A673 (cell line): ENCODE measurements at regions of chr15 and their contacts with region 1.

Region 1: DNA sequence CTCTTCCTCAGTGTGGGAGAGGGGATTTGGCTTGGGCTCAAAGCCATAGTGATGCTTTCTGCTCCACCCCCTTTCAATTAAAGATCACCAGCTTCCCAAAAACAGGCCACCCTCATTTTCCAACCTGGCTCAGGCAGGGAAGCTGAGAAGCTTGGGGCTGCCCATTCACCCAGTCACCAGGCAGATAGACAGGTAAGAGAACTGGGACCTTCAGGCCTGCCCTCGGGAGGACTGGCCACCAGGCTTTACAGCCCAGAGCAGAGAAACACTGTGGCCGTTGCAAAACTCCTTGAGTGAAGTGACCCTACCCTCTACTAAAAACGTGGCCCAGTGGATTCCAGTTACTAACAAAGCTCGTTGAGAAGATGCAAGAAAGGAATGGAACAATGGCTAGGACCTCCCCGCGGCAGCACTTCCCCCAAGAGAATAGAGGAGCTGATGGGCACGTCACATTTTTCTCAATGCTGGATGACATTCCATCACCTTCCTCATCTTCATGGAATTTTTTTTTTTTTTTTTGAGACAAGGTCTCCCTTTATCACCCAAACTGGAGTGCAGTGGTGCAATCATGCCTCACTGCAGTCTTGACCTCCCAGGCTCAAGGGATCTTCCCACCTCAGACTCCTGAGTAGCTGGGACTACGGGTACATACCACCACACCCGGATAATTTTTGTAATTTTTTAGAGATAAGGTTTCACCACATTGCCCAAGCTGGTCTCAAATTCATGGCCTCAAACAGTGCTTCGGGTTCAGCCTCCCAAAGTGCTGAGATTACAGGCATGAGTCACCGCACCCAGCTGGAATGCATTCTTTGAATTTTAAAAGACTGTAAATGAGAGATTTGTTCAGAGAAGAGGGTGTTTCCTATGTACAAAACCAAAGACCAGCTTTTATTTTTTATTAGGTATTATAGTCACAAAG is 37.9 kb downstream of the LIPC start:
- DNase-seq: peak; percentile 93
- H3K4me3 ChIP-seq: no peak overlapping the region
- H3K27ac ChIP-seq: peak overlapping the region; percentile 63
- H3K4me1 ChIP-seq: peaks cover 68% of the 10 kb centered on the region
- H3K27me3 ChIP-seq: no peaks in the 10 kb centered on the region
- CTCF ChIP-seq: no peak

Region 2: DNA sequence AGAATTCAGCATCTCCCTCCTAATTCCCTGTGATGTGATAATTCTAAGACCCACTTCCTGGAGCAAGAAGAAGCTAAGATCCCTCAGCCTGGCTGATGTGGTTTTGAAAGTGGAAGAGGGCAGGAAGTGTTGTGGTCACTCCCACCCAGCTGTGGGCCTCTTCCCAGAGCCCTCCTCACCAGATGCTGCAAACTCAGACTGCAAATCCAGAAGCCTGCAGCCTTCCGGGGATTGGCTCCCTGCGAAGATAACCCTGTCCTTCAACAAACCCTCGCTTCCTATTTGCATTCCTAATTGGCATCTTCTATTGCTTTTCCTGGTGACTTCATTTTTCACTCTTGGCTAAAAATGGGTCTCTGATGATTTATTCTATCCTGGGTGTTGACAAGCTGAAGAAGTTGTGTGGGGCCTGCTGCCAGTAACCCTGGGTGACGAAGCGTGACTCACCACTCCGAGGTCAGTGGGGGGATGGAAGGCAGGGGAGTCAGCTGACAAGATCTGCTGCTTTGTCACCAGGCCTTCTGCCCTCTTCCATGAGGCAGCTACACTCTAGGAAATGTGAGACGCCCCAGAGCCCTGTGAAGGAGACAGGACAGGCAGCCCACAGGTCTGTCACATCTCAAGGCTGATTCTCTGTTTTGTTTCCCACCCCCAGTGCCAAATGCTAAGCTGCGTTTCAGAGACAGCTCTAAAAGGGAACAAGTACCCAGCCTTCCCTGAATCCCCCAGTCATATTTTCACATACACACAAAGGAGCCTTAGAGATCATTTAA is 137.6 kb before region 1 on chr15:
- CTCF ChIA-PET with region 1: no interaction called
- POLR2A ChIA-PET with region 1: no interaction called
- intact Hi-C with region 1: loop called (anchors 5 kb)
- DNase-seq: peak; percentile 98
- H3K4me3 ChIP-seq: peak overlapping the region; percentile 8
- H3K27ac ChIP-seq: peak overlapping the region; percentile 90
- H3K4me1 ChIP-seq: peaks cover 31% of the 10 kb centered on the region
- H3K27me3 ChIP-seq: no peaks in the 10 kb centered on the region
- CTCF ChIP-seq: no peak